A549 (cell line): ENCODE measurements at regions of chr10 and their contacts with region 1.

Region 1: DNA sequence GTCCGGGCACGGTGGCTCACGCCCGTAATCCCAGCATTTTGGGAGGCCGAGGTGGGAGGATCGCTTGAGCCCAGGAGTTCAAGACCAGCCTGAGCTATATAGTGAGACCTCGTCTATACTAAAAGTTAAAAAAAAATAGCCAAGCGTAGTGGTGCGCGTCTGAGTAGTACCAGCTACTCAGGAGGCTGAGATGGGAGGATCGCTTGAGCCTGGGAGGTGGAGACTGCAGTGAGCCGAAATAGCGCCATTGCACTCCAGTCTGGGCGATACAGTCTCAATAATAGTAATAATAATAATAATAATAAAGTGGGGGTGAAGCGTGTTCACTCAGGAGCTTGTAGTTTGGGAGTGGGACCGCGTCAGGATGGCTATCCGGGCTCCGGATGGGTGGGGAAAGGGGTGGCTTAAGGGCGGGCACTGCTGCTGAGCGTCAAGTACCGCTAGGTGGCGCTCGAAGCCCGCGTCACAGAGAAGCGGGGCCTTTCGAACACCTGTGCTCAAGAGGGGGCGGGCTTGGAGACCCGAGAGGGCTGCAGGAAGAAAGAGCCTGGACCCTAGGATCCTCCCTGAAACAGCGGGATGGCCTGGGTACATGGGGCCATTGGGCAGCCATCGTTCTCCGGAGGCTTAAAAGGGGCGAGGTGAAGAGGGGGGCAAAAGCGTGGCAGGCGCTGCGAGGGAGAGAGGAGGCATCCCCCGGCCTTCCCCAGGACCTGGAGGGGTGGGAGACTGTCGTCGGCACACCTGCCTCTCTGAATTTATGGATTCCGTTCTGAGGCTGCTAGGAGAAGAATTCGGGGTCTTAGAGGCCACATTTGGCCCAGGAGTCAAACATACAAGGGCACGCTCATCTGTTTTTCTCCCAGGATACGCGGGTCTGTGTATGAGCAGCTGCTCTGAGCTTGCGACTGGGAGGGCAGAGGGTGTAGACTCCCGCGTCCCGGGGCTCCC is 14.5 kb downstream of the LBX1 start:
- DNase-seq: peak; percentile 66 to 74
- ATAC-seq: peak; percentile 69 to 86
- H3K4me3 ChIP-seq: peak overlapping the region; percentile 40
- H3K27ac ChIP-seq: no peak overlapping the region
- H3K4me1 ChIP-seq: no peaks in the 10 kb centered on the region
- CTCF ChIP-seq: peak; percentile 93
- EP300 ChIP-seq: no peak
- POLR2A ChIP-seq: no peak
- RAD21 ChIP-seq: peak; percentile 91 to 93

Region 2: GRCh38 chr10:100748231-100749058 is 466.3 kb before region 1 on chr10:
- CTCF ChIA-PET with region 1: no interaction called
- POLR2A ChIA-PET with region 1: no interaction called
- DNase-seq: no peak
- ATAC-seq: no peak
- H3K4me3 ChIP-seq: no peak overlapping the region
- H3K27ac ChIP-seq: no peak overlapping the region
- H3K4me1 ChIP-seq: peaks cover 18% of the 10 kb centered on the region
- CTCF ChIP-seq: no peak
- EP300 ChIP-seq: no peak
- POLR2A ChIP-seq: no peak
- RAD21 ChIP-seq: no peak

Region 3: GRCh38 chr10:101161494-101162299 is 53.0 kb before region 1 on chr10:
- CTCF ChIA-PET with region 1: interaction called, 67 read pairs
- POLR2A ChIA-PET with region 1: no interaction called
- DNase-seq: peak; percentile 80 to 87
- ATAC-seq: peak; percentile 94 to 96
- H3K4me3 ChIP-seq: peak overlapping the region; percentile 44
- H3K27ac ChIP-seq: peak overlapping the region in 1 of 2 experiments; percentile 49; a peak in 1 of 6 replicates
- H3K4me1 ChIP-seq: 0 out of 3 replicates have a peak, but pooled peaks cover 6% of the 10 kb centered on the region
- CTCF ChIP-seq: peak; percentile 95
- EP300 ChIP-seq: no peak
- POLR2A ChIP-seq: no peak
- RAD21 ChIP-seq: peak; percentile 90 to 91

Region 4: DNA sequence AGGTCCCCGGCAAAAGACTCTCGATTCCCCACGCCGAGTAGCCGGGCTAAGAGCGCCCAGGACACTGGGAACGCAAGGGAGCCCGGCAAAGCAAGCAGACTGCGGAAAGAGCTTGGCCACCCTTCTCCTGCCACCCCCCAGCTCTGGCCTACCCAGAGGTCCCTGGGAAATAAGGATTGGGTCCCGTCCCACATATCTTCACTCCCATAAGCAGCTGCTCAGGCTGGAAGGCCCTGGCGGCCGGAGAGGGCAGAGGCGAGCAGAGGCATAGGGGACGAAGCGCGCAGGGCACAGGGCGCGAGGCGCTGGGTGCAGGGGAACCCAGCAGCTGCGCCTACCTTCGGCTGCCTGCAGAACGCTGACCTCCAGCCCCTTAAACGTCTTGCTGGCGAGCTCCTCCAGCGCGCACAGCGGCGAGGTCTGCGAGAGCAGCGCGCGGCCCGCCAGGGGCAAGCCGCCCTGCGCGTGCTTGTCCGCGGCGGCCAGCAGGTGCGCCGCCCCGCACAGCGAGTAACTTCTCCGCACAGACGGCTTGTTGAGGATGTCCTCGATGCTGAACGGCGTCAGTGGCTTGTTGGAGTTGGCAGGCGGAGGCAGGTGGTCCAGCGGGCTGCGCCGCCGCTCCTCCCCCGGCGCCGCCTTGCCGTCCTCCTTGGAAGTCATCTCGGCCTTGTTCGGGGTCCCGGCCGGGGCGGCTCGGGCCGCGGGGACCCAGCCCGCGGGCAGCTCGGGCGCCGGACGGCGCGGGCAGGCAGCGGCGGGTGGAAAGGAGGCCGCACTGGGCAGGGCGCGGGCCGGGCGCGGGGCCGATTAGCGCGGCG is 13.6 kb after region 1 on chr10:
- CTCF ChIA-PET with region 1: interaction called, 63 read pairs
- POLR2A ChIA-PET with region 1: interaction called, 3 read pairs
- DNase-seq: peak; percentile 50 to 67
- ATAC-seq: peak; percentile 80 to 87
- H3K4me3 ChIP-seq: peak overlapping the region; percentile 52
- H3K27ac ChIP-seq: peak overlapping the region in 1 of 2 experiments; percentile 2; a peak in 1 of 6 replicates
- H3K4me1 ChIP-seq: 0 out of 3 replicates have a peak, but pooled peaks cover 4% of the 10 kb centered on the region
- CTCF ChIP-seq: no peak
- EP300 ChIP-seq: no peak
- POLR2A ChIP-seq: no peak
- RAD21 ChIP-seq: no peak

Region 5: GRCh38 chr10:101272229-101272868 is 57.6 kb after region 1 on chr10:
- CTCF ChIA-PET with region 1: interaction called, 206 read pairs
- POLR2A ChIA-PET with region 1: no interaction called
- DNase-seq: peak; percentile 68 to 95
- ATAC-seq: peak; percentile 88 to 97
- H3K4me3 ChIP-seq: no peak overlapping the region
- H3K27ac ChIP-seq: 0 out of 6 replicates have a peak overlapping the region, but pooled peaks of 1 of the 2 experiments have one; percentile 37
- H3K4me1 ChIP-seq: peaks cover 5% of the 10 kb centered on the region; the same call in 1 of the 3 replicates
- CTCF ChIP-seq: peak; percentile 65
- EP300 ChIP-seq: no peak
- POLR2A ChIP-seq: no peak
- RAD21 ChIP-seq: peak; percentile 50 to 55; a peak in 4 of 5 replicates

Region 6: GRCh38 chr10:101453791-101454718 is 239.3 kb after region 1 on chr10:
- CTCF ChIA-PET with region 1: interaction called, 26 read pairs
- POLR2A ChIA-PET with region 1: no interaction called
- DNase-seq: no peak
- ATAC-seq: no peak
- H3K4me3 ChIP-seq: no peak overlapping the region
- H3K27ac ChIP-seq: no peak overlapping the region
- H3K4me1 ChIP-seq: no peaks in the 10 kb centered on the region
- CTCF ChIP-seq: no peak
- EP300 ChIP-seq: no peak
- POLR2A ChIP-seq: no peak
- RAD21 ChIP-seq: no peak

Region 7: DNA sequence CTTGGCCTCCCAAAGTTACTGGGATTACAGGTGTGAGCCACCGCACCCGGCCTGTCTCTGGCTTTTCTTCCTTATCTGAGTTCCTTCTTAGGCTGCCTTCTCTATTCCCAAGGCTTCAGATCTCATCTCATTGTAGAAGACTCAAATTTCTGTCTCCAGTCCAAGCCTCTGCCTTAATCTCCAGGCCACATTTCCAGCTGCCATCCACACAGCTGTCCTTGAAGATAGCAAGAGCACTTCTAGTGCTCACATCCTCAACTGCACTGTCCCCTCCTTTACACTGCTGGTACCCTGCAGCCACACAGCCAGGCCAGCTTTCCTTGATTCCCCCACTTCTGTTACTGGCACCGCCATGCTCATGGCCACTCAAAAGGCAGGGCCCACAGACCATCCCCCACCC is 337.7 kb after region 1 on chr10:
- CTCF ChIA-PET with region 1: interaction called, 10 read pairs
- POLR2A ChIA-PET with region 1: no interaction called
- DNase-seq: no peak
- ATAC-seq: no peak
- H3K4me3 ChIP-seq: no peak overlapping the region
- H3K27ac ChIP-seq: no peak overlapping the region
- H3K4me1 ChIP-seq: no peaks in the 10 kb centered on the region
- CTCF ChIP-seq: no peak
- EP300 ChIP-seq: no peak
- POLR2A ChIP-seq: no peak
- RAD21 ChIP-seq: no peak

Region 8: GRCh38 chr10:101587725-101588653 is 373.3 kb after region 1 on chr10 and contains the starts of genes DPCD and POLL:
- CTCF ChIA-PET with region 1: interaction called, 19 read pairs
- POLR2A ChIA-PET with region 1: no interaction called
- DNase-seq: peak; percentile 90 to 99
- ATAC-seq: peak; percentile 97 to 98
- H3K4me3 ChIP-seq: peak within 1 kb of the TSS; percentile 69
- H3K27ac ChIP-seq: peak within 1 kb of the TSS; percentile 85 to 96
- H3K4me1 ChIP-seq: peaks cover 15% of the 10 kb centered on the region
- CTCF ChIP-seq: no peak
- EP300 ChIP-seq: no peak
- POLR2A ChIP-seq: peak; percentile 48; the same call in 1 of the 2 replicates
- RAD21 ChIP-seq: no peak
- polyA plus RNA-seq, gene DPCD: 39.7 and 40.8 TPM in 2 replicates
- polyA plus RNA-seq, gene POLL: 16.7 and 18.1 TPM in 2 replicates